B cell (primary cell): ENCODE measurements at regions of chr17 and their contacts with region 1.

Region 1: DNA sequence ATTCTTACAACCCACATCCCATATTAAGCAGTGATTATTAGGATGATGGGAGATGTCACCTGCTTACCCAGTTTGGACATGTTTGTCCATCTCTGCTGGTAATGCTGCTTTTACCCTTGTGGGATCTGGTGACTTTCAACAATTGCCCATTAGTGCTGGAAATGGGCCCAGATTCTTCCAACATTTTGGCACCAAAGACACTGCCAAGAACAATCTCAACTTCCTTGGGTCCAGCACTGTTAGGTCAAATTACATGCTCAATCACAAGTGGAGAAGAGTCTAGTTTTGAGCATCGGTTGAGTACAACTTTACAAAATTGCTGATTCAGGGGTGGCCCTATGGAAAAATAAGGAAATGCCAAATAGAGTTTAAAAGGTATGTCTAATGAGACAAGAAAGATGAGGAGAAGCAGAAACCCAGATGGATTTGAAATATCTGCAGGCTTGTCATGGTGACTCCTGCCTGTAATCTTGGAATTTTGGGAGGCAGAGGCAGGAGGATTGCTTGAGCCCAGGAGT is 13.0 kb upstream of the ZFP3 start:
- DNase-seq: no peak
- ATAC-seq: no peak
- H3K4me3 ChIP-seq: no peak overlapping the region
- H3K4me3 Mint-ChIP-seq: no peak overlapping the region
- H3K27ac ChIP-seq: no peak overlapping the region
- H3K27ac Mint-ChIP-seq: peak overlapping the region; percentile 37
- H3K4me1 ChIP-seq: peaks cover 0 to 3% of the 10 kb centered on the region in 2 donors
- H3K4me1 Mint-ChIP-seq: peaks cover 4% of the 10 kb centered on the region
- H3K27me3 ChIP-seq: peaks cover 0 to 6% (median 0%) of the 10 kb centered on the region in 4 experiments
- H3K27me3 Mint-ChIP-seq: peaks cover 9% of the 10 kb centered on the region
- CTCF ChIP-seq: no peak

Region 2: DNA sequence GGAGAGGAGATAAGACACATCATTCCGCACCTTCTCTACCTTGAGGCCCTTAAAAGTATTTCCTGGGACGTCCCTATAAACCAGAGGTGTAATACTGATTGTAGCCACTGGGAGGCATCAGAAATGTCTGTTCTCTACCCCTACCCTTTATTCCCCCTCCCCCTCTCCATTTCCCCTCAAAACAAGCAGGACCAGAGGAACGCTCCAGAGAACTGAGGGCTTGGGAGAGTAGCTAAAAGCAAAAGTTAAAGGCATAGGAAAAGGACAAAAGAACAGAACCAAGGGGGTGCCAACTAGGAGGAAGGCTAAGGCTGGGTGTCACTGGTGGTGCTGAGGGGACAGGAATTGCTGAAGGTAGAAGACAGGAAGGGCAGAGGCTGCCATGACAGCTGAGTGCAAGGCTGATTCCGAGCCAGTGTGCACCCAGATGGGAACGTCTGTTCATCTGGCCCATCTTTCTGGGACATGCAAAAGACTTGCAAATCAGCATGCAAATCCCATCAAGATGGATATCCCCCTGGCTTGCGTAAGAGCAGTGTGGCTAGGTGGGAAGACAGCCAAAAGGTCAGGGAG is 84.6 kb before region 1 on chr17:
- CTCF ChIA-PET with region 1: interaction called, 34 read pairs
- POLR2A ChIA-PET with region 1: no interaction called
- intact Hi-C with region 1: loop called (anchors 1 kb)
- DNase-seq: peak; percentile 66
- ATAC-seq: peak; percentile 75
- H3K4me3 ChIP-seq: no peak overlapping the region
- H3K4me3 Mint-ChIP-seq: peak overlapping the region; percentile 29
- H3K27ac ChIP-seq: no peak overlapping the region
- H3K27ac Mint-ChIP-seq: peak overlapping the region; percentile 87
- H3K4me1 ChIP-seq: peaks cover 18 to 35% of the 10 kb centered on the region in 2 donors
- H3K4me1 Mint-ChIP-seq: peaks cover 41% of the 10 kb centered on the region
- H3K27me3 ChIP-seq: no peaks in the 10 kb centered on the region
- H3K27me3 Mint-ChIP-seq: no peaks in the 10 kb centered on the region
- CTCF ChIP-seq: peak; percentile 77

Region 3: DNA sequence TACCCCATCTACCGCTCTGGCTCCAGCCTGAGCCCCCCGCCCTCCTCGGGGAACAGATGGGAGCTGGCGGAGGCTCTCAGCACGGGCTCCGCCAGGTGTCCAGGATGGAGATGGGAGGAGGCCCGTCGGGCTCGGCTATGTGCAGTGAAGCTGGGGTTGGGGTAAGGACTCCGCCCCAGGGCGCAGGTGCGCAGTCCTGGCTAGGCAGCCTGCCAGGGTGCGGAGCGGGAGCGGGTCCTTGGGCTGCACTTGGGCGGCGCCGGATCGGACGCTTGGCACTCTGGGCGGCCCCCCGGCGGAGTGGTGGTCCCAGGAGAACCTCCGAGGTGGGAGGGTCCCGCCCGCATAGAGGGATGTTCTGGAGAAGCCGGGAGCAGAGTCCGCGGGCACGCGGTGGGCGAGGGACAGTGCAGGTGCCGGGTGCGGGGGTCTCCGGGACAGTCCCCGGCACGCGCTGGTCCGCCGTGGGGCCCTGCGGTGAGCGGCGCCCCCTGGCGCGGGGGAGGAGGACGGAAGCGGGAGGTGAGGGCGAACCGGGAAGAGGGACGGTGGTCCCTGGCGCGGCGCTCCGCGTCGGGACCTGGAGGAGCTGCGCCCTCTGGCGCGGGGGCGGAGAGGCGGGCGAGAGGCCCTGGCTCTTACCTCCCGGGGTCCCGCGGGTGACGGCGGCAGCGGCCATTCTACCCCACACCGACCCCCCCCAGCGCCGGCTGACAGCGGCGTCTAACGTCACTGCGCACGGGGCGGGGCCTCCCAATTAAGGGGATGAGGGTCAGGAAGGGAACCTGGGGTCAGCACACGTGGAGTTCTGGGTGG is 78.1 kb before region 1 on chr17 and contains the start of gene CAMTA2:
- CTCF ChIA-PET with region 1: interaction called, 11 read pairs
- POLR2A ChIA-PET with region 1: no interaction called
- intact Hi-C with region 1: no loop called
- DNase-seq: peak; percentile 91
- ATAC-seq: peak; percentile 89
- H3K4me3 ChIP-seq: peak within 1 kb of the TSS; percentile 67 to 96 (median 81)
- H3K4me3 Mint-ChIP-seq: peak within 1 kb of the TSS; percentile 91
- H3K27ac ChIP-seq: peak within 1 kb of the TSS; percentile 84 to 90
- H3K27ac Mint-ChIP-seq: peak within 1 kb of the TSS; percentile 90
- H3K4me1 ChIP-seq: peaks cover 21 to 28% of the 10 kb centered on the region in 2 donors
- H3K4me1 Mint-ChIP-seq: peaks cover 35% of the 10 kb centered on the region
- H3K27me3 ChIP-seq: no peaks in the 10 kb centered on the region
- H3K27me3 Mint-ChIP-seq: no peaks in the 10 kb centered on the region
- CTCF ChIP-seq: peak; percentile 88
- total RNA-seq, gene CAMTA2: 57.6 and 57.9 TPM in 2 replicates

Region 4: GRCh38 chr17:5031365-5032082 is 33.8 kb before region 1 on chr17:
- CTCF ChIA-PET with region 1: interaction called, 153 read pairs
- POLR2A ChIA-PET with region 1: interaction called, 11 read pairs
- intact Hi-C with region 1: loop called (anchors 1 kb)
- DNase-seq: peak; percentile 88
- ATAC-seq: peak; percentile 87
- H3K4me3 ChIP-seq: peak overlapping the region; percentile 34 to 67 (median 38)
- H3K4me3 Mint-ChIP-seq: peak overlapping the region; percentile 89
- H3K27ac ChIP-seq: peak overlapping the region; percentile 24 to 62
- H3K27ac Mint-ChIP-seq: peak overlapping the region; percentile 67
- H3K4me1 ChIP-seq: peaks cover 7 to 18% of the 10 kb centered on the region in 2 donors
- H3K4me1 Mint-ChIP-seq: peaks cover 25% of the 10 kb centered on the region
- H3K27me3 ChIP-seq: peaks cover 0 to 21% (median 5%) of the 10 kb centered on the region in 4 experiments
- H3K27me3 Mint-ChIP-seq: no peaks in the 10 kb centered on the region
- CTCF ChIP-seq: peak; percentile 80

Region 5: DNA sequence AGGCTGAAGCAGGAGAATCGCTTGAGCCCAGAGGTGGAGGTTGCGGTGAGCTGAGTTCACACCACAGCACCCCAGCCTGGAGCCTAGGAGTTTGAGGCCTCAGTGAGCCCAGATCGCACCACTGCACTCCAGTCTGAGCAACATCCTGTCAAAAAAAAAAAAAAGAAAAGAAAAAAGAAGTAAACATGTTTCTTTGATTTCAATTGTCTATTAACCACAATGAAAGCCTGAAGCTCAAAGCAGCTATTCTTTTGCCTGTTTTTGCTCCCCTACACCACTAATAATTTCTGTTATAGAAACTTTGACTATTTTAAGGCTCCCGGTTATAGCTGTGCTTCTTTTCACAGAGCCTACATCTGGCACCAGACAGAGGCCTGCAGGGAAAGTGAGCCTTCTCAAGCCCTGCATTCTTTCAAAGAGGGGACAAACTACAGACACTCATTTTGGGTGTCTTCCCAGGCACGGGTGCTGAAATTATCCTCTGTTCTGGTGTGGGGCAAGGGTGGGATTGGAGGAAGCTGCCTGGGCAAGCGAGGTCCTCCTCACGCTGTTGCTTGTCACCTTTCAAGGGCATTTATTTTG is 15.9 kb before region 1 on chr17:
- CTCF ChIA-PET with region 1: interaction called, 51 read pairs
- POLR2A ChIA-PET with region 1: interaction called, 4 read pairs
- intact Hi-C with region 1: loop called (anchors 1 kb)
- DNase-seq: peak; percentile 74
- ATAC-seq: peak; percentile 91
- H3K4me3 ChIP-seq: no peak overlapping the region
- H3K4me3 Mint-ChIP-seq: peak overlapping the region; percentile 70
- H3K27ac ChIP-seq: peak overlapping the region; percentile 61 to 76
- H3K27ac Mint-ChIP-seq: peak overlapping the region; percentile 97
- H3K4me1 ChIP-seq: peaks cover 13 to 35% of the 10 kb centered on the region in 2 donors
- H3K4me1 Mint-ChIP-seq: peaks cover 41% of the 10 kb centered on the region
- H3K27me3 ChIP-seq: peaks cover 0 to 4% (median 0%) of the 10 kb centered on the region in 4 experiments
- H3K27me3 Mint-ChIP-seq: no peaks in the 10 kb centered on the region
- CTCF ChIP-seq: no peak